B cell (primary cell): ENCODE measurements at regions of chr19 and their contacts with region 1.

Region 1: DNA sequence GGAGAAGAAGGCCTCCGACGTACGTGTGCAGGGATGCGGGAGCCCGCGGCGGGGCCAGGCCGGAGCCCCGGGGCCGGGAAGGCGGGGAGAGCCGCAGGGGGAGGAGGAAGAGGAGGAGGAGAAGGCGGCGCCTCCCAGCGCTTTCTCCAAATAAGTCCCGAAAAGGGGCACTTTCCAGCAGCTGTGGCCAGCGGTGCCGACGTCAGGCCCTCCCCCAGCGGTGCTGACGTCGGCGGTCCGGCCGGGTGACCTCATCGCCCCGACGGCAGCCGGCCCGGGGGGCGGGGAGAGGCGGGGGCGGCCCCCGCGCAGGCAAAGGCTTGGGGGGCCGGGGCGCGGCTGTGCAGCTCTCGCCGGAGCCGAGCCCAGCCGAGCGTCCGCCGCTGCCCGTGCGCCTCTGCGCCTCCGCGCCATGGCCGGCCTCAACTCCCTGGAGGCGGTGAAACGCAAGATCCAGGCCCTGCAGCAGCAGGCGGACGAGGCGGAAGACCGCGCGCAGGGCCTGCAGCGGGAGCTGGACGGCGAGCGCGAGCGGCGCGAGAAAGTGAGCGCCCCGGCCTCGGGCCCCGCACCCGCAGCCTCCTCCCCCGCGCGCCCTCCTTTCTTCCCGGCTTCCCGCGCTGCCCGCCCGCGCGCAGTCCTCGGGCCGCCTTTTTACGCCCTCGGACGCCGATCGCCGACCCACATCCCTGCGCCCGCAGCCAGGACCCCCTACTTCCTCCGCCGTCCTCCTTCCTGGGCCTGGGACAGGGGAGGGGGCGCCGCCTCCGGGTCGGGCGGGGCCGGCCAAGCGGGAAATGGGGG is at the start of gene TPM4:
- DNase-seq: peak; percentile 93
- ATAC-seq: peak; percentile 60
- H3K4me3 ChIP-seq: peak within 1 kb of the TSS; percentile 56 to 86 (median 73)
- H3K4me3 Mint-ChIP-seq: peak within 1 kb of the TSS; percentile 88
- H3K27ac ChIP-seq: peak within 1 kb of the TSS; percentile 91 to 92
- H3K27ac Mint-ChIP-seq: peak within 1 kb of the TSS; percentile 94
- H3K4me1 ChIP-seq: peaks cover 35 to 56% of the 10 kb centered on the region in 2 donors
- H3K4me1 Mint-ChIP-seq: peaks cover 60% of the 10 kb centered on the region
- H3K27me3 ChIP-seq: no peaks in the 10 kb centered on the region
- H3K27me3 Mint-ChIP-seq: no peaks in the 10 kb centered on the region
- CTCF ChIP-seq: no peak
- total RNA-seq, gene TPM4: 127 TPM in 2 replicates

Region 2: DNA sequence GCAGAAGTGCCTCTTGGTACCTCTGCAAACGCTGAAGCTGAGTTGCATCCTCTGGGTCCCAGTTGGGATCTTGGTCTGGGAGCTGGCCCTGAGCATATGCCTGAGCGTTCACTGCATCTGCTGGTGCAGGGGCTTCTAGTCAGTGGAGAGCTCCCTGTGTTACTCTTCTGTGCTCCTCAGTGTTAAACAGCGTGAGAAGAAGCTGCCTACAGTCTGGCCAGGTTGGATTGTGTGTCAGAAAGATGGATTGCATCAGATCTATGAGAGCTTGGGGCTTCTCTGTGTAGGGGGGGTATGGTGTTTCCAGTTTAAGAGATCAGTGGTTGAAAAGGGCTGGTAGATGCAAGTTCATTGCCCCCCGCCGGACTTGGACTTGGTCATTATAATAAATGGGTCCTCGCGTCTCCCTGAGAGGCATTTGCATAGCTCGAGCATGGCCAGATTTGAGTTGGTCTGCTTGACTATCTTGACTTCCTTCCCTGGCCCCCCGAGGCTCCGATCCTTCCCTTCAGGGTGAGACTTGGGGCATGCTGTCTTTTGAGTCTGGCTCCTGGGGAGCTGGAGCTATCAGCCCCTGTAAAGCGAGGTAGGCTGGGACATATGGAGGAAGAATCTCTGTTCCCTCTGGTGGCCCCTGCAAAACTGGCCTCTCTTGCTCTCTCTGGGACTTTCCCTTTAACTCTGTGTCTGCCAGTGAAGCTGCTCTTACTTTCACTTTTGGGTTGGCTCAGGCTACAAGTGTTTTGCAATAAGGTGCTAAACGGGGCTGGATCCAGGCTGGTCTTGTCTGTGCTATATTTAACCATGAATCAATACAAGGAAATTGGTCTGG is 74.7 kb before region 1 on chr19:
- CTCF ChIA-PET with region 1: no interaction called
- POLR2A ChIA-PET with region 1: no interaction called
- intact Hi-C with region 1: no loop called
- DNase-seq: peak; percentile 59
- ATAC-seq: peak; percentile 58
- H3K4me3 ChIP-seq: peak overlapping the region in 4 of 5 experiments; percentile 23 to 58 (median 52)
- H3K4me3 Mint-ChIP-seq: peak overlapping the region; percentile 84
- H3K27ac ChIP-seq: no peak overlapping the region
- H3K27ac Mint-ChIP-seq: peak overlapping the region; percentile 60
- H3K4me1 ChIP-seq: peaks cover 13 to 16% of the 10 kb centered on the region in 2 donors
- H3K4me1 Mint-ChIP-seq: peaks cover 15% of the 10 kb centered on the region
- H3K27me3 ChIP-seq: no peaks in the 10 kb centered on the region
- H3K27me3 Mint-ChIP-seq: no peaks in the 10 kb centered on the region
- CTCF ChIP-seq: no peak

Region 3: DNA sequence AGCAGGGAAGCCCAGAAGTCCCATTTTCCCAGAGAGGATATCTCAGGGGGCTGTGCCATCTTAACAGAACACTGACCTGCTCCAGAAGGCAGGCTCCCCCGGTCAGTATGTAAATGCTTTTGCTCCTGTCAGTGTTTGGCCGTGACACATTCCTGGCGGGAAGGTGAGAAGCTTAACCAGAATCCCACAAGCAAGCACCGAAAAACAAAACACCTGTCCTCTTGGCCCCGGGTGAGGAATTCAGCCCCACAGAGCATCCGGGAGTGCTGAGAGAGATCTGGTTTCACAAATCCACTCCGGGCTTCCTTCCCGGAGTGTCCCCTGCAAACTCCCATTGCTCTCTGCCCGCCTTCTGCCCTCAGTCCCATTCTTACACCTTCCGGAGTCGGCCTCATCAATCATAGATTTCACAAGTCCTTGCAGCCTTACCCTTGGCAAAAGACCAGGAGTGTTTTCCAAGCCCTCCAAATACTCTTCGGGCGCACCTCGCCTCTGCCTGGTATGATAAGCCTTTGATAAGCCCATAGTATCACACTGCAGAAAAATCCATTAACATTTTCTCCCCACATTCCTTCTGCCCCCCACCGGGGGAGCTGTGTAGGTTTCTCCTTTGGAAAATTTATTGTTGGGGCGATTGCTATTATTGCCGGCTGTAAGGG is 12.1 kb after region 1 on chr19:
- CTCF ChIA-PET with region 1: interaction called, 13 read pairs
- POLR2A ChIA-PET with region 1: interaction called, 3 read pairs
- intact Hi-C with region 1: no loop called
- DNase-seq: no peak
- ATAC-seq: no peak
- H3K4me3 ChIP-seq: no peak overlapping the region
- H3K4me3 Mint-ChIP-seq: no peak overlapping the region
- H3K27ac ChIP-seq: no peak overlapping the region
- H3K27ac Mint-ChIP-seq: peak overlapping the region; percentile 41
- H3K4me1 ChIP-seq: peaks cover 18 to 27% of the 10 kb centered on the region in 2 donors
- H3K4me1 Mint-ChIP-seq: peaks cover 24% of the 10 kb centered on the region
- H3K27me3 ChIP-seq: no peaks in the 10 kb centered on the region
- H3K27me3 Mint-ChIP-seq: no peaks in the 10 kb centered on the region
- CTCF ChIP-seq: no peak

Region 4: GRCh38 chr19:16095071-16095571 is 18.8 kb after region 1 on chr19:
- CTCF ChIA-PET with region 1: interaction called, 6 read pairs
- POLR2A ChIA-PET with region 1: interaction called, 10 read pairs
- intact Hi-C with region 1: no loop called
- DNase-seq: peak; percentile 40
- ATAC-seq: peak; percentile 43
- H3K4me3 ChIP-seq: no peak overlapping the region
- H3K4me3 Mint-ChIP-seq: no peak overlapping the region
- H3K27ac ChIP-seq: peak overlapping the region in 1 of 2 donors; percentile 11
- H3K27ac Mint-ChIP-seq: peak overlapping the region; percentile 69
- H3K4me1 ChIP-seq: peaks cover 7 to 10% of the 10 kb centered on the region in 2 donors
- H3K4me1 Mint-ChIP-seq: peaks cover 18% of the 10 kb centered on the region
- H3K27me3 ChIP-seq: no peaks in the 10 kb centered on the region
- H3K27me3 Mint-ChIP-seq: no peaks in the 10 kb centered on the region
- CTCF ChIP-seq: no peak